Motor neuron (in vitro differentiated cells): ENCODE measurements at regions of chr1 and their contacts with region 1.

Region 1: DNA sequence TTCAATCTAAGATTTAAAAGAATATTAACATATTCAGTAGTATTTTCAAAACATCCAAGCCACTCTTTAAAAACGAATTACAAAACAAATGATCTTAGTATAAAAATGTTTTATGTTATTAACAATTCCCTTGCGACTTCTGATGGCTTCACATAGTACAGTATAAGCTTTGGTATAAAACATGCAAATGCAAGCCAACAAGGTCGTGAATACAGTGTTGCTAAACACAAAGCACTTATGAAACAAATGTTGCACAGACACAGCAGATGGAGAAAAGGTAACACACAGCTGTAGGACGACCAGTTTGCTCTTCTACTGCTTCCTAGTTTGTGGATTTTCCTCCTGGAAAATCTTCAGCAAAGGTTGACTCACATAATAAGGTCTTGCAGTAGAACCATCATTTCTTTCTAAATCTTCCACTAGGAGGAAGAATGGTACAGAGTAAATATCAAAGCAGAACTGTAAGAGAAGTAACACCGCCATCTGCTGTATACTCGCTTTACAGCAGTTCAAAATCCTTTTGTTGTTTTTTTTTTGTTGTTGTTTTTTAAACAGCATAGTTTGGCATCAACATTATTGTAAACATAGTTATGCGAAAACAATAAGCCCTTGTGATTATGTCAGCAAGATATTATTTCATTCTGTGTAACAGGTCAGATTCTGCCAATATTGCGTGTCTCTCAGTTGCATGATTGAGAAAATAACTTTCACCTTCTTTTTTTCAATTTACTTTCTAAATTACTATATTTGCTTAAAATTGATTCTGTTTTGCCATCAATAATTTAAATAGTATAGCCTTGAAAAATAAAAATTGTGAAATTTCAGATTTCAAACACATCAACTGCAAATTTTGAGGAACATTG is 69.5 kb downstream of the LHX8 start:
- ATAC-seq: peak; percentile 70 to 86 (median 82)
- H3K4me3 ChIP-seq: no peak overlapping the region
- H3K27ac ChIP-seq: no peak overlapping the region
- H3K4me1 ChIP-seq: peaks cover 3 to 5% of the 10 kb centered on the region in 2 donors

Region 2: DNA sequence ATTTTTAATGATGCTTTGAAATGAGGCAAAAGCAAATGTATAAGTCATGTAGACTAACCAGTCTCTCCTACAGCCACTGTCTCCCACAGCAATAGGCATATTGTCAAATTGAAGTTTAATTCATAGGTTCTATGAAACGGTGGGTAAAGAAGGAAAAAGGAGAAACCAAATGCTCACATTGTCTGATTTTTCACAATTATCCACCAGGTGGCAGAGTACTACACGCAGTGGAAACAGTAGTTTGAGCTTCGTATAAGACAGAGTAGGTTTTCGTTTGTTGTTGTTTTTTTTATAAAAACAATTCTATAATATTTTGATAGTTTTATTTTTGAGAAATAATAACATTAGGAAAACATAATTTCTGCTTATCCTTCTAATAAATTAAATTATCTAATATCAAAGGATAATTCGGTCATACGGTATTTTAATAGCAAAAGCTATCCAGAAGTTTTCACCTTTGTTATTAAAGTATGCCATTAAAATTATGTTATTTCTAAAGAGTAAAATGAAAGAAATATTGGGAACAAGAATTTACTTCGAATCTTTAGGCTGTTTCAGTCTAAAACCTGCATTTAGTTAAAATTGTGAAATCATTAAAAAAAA is 431.6 kb before region 1 on chr1:
- in situ Hi-C with region 1: loop called in 7 of 9 experiments (anchors 10 to 25 kb)
- ATAC-seq: peak; percentile 32 to 76 (median 58)
- H3K4me3 ChIP-seq: no peak overlapping the region
- H3K27ac ChIP-seq: no peak overlapping the region
- H3K4me1 ChIP-seq: no peaks in the 10 kb centered on the region